ENCODE measurements at regions of chr17 and their contacts with region 1.

Region 1: GRCh38 chr17:81484195-81484979 is 28.2 kb downstream of the ACTG1 start:
- DNase-seq: peak in 1 of 2 experiments; percentile 90
- H3K4me3 ChIP-seq: peak overlapping the region; percentile 37; the same call in 1 of the 2 replicates
- H3K27ac ChIP-seq: no peak overlapping the region
- H3K4me1 ChIP-seq: no peaks in the 10 kb centered on the region
- H3K27me3 ChIP-seq: no peaks in the 10 kb centered on the region
- CTCF ChIP-seq: peak; percentile 82

Region 2: GRCh38 chr17:80908776-80909175 is 575.6 kb before region 1 on chr17:
- CTCF ChIA-PET with region 1: no interaction called
- POLR2A ChIA-PET with region 1: no interaction called
- intact Hi-C with region 1: no loop called
- DNase-seq: no peak
- H3K4me3 ChIP-seq: no peak overlapping the region
- H3K27ac ChIP-seq: no peak overlapping the region
- H3K4me1 ChIP-seq: no peaks in the 10 kb centered on the region
- H3K27me3 ChIP-seq: no peaks in the 10 kb centered on the region
- CTCF ChIP-seq: no peak

Region 3: GRCh38 chr17:81253358-81254131 is 230.8 kb before region 1 on chr17:
- CTCF ChIA-PET with region 1: interaction called, 3 read pairs
- POLR2A ChIA-PET with region 1: no interaction called
- intact Hi-C with region 1: loop called (anchors 1 kb)
- DNase-seq: peak in 1 of 2 experiments; percentile 51
- H3K4me3 ChIP-seq: no peak overlapping the region
- H3K27ac ChIP-seq: no peak overlapping the region
- H3K4me1 ChIP-seq: no peaks in the 10 kb centered on the region
- H3K27me3 ChIP-seq: no peaks in the 10 kb centered on the region
- CTCF ChIP-seq: peak; percentile 79

Region 4: GRCh38 chr17:81394921-81395599 is 89.3 kb before region 1 on chr17 and contains the start of gene BAHCC1:
- CTCF ChIA-PET with region 1: interaction called, 7 read pairs
- POLR2A ChIA-PET with region 1: interaction called, 7 read pairs
- intact Hi-C with region 1: loop called (anchors 1 kb)
- DNase-seq: peak; percentile 96 to 100
- H3K4me3 ChIP-seq: peak within 1 kb of the TSS; percentile 78
- H3K27ac ChIP-seq: peak within 1 kb of the TSS; percentile 73
- H3K4me1 ChIP-seq: peaks cover 15% of the 10 kb centered on the region
- H3K27me3 ChIP-seq: no peaks in the 10 kb centered on the region
- CTCF ChIP-seq: no peak
- total RNA-seq, gene BAHCC1: 33.7 and 35.4 TPM in 2 replicates

Region 5: GRCh38 chr17:81428948-81429774 is 55.2 kb before region 1 on chr17:
- CTCF ChIA-PET with region 1: interaction called, 10 read pairs
- POLR2A ChIA-PET with region 1: no interaction called
- intact Hi-C with region 1: loop called (anchors 5 kb)
- DNase-seq: peak in 1 of 2 experiments; percentile 87
- H3K4me3 ChIP-seq: no peak overlapping the region
- H3K27ac ChIP-seq: no peak overlapping the region
- H3K4me1 ChIP-seq: peaks cover 8% of the 10 kb centered on the region; the same call in 1 of the 2 replicates
- H3K27me3 ChIP-seq: no peaks in the 10 kb centered on the region
- CTCF ChIP-seq: no peak

Region 6: GRCh38 chr17:81461607-81462500 is 22.5 kb before region 1 on chr17:
- CTCF ChIA-PET with region 1: no interaction called
- POLR2A ChIA-PET with region 1: no interaction called
- intact Hi-C with region 1: no loop called
- DNase-seq: no peak
- H3K4me3 ChIP-seq: no peak overlapping the region
- H3K27ac ChIP-seq: no peak overlapping the region
- H3K4me1 ChIP-seq: no peaks in the 10 kb centered on the region
- H3K27me3 ChIP-seq: no peaks in the 10 kb centered on the region
- CTCF ChIP-seq: no peak

Region 7: DNA sequence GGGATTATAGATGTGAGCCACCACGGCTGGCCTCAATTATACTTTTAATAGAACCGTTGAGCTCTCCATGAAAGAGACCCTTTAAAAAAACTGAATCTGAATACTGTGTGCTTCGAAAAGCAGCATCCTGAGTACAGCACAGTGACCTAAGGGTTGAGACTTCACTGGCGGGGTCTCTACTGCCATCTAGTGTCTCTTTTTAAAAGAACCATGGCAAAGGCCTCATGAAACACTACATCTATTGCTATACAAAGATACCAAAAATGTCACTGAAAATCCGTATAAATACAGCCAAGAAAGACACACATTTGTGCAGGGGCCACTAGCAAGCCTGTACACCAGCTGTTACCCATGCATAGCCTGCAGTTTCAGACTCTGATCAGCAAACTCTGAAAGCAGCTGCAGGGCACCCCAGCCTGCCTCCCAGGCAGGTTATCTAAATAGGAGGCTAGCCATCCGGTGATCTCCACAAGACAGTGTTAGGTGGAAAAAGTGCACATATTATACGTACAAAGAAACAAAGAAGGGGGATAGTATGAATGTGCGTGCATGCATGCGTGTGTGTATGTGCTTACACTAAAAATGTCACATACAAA is 117.2 kb after region 1 on chr17:
- CTCF ChIA-PET with region 1: interaction called, 4 read pairs
- POLR2A ChIA-PET with region 1: no interaction called
- intact Hi-C with region 1: loop called (anchors 1 kb)
- DNase-seq: peak; percentile 50
- H3K4me3 ChIP-seq: no peak overlapping the region
- H3K27ac ChIP-seq: no peak overlapping the region
- H3K4me1 ChIP-seq: no peaks in the 10 kb centered on the region
- H3K27me3 ChIP-seq: no peaks in the 10 kb centered on the region
- CTCF ChIP-seq: peak; percentile 70